Left lung (tissue), 14 donors: ENCODE measurements at regions of chr9 and their contacts with region 1.

Region 1: DNA sequence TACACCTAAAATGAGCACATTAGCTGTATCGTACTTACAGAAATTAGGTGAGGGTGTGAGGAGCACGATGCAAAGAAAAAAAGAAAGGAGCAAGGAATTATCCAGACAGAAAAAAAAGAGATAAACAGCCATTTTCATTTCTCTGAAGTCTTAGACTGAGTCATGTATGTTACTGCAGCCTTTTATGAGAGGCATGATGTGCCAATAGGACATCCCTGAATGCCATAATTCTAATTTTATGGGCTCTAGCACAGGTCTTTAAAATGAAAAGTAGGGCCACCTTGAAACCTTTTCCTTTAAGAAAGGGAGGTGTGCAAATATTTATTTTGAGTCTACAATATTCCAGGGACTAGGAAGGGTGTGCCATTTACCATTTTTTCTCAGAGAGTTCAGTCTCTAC is 74.1 kb upstream of the PTPRD start:
- DNase-seq: no peak
- ATAC-seq: no peak
- H3K4me3 ChIP-seq: no peak overlapping the region
- H3K27ac ChIP-seq: no peak overlapping the region
- H3K4me1 ChIP-seq: no peaks in the 10 kb centered on the region
- H3K27me3 ChIP-seq: no peaks in the 10 kb centered on the region
- CTCF ChIP-seq: no peak

Region 2: GRCh38 chr9:10633785-10634184 is 53.2 kb before region 1 on chr9:
- intact Hi-C with region 1: loop called in 1 of 2 experiments (anchors 10 kb)
- DNase-seq: no peak
- ATAC-seq: no peak
- H3K4me3 ChIP-seq: no peak overlapping the region
- H3K27ac ChIP-seq: no peak overlapping the region
- H3K4me1 ChIP-seq: no peaks in the 10 kb centered on the region
- H3K27me3 ChIP-seq: no peaks in the 10 kb centered on the region
- CTCF ChIP-seq: no peak